ENCODE measurements at regions of chr11 and their contacts with region 1.

Region 1: DNA sequence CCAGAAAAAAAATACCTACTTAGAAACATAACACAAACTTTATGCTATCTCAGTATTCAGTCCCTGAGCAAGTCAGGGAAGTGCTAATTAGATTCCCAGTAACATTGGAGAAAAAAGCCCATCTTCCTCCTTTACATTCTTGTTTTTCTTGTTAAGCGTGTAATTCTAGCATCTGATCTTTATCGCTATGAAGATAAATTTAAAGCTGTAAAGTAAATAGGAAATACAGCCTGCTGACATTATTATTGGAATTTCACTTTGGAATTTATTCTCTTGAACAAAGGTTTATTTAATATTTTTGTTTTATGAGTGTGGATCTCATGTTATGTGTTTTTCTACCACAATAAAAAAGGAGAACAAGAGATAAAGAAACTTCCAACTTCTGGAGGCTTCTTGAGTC is 13.9 kb downstream of the ALKBH3 start:
- DNase-seq: no peak
- H3K4me3 ChIP-seq: no peak overlapping the region
- CTCF ChIP-seq: no peak
- POLR2A ChIP-seq: no peak

Region 2: GRCh38 chr11:43789700-43790443 is 104.7 kb before region 1 on chr11:
- intact Hi-C with region 1: no loop called
- DNase-seq: no peak
- H3K4me3 ChIP-seq: no peak overlapping the region
- CTCF ChIP-seq: no peak
- POLR2A ChIP-seq: no peak

Region 3: GRCh38 chr11:43944761-43945311 is 50.3 kb after region 1 on chr11:
- intact Hi-C with region 1: loop called (anchors 5 kb)
- DNase-seq: peak in 1 of 2 donors; percentile 93
- H3K4me3 ChIP-seq: no peak overlapping the region
- CTCF ChIP-seq: no peak
- POLR2A ChIP-seq: no peak

Region 4: GRCh38 chr11:44256673-44257291 is 362.2 kb after region 1 on chr11:
- intact Hi-C with region 1: no loop called
- DNase-seq: peak in 1 of 2 donors; percentile 78
- H3K4me3 ChIP-seq: no peak overlapping the region
- CTCF ChIP-seq: no peak
- POLR2A ChIP-seq: no peak

Measured in lower leg skin (tissue), 4 donors.